ENCODE measurements at regions of chr2 and their contacts with region 1.

Region 1: DNA sequence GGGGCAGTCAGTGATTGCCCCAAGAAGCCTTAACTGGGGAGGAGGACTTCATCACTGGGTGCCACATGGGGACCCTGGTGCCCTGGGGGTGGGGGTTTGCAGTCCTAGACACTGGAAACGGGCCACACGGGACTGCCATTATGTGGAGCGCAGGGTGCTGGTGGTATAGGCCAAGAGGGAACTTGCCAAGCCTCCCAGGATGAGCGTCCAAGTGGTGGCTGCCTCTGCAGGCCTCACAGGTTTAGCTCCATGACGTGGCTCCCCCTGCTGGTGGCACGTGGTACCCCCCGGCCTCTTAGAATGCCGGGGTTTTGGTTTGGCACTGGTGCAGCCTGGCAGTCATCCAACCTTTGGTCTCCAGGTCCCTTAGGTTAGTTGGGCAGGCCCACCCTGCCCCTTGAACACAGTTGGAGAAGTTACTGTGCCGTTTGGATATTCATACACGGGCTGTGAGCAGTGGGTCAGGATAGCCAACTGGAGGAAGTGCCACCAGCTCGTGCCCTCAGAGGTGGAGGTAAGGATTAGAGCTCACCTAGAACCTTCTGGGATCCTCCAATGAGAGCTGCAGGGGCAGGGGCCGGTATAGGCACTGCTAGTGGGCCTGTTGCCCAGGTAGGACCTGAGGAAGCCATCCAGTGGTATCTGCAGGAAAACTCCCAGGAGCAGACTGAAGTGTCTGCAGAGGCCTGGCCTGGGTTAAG is 5.6 kb downstream of the PTMA start:
- DNase-seq: peak; percentile 89
- H3K27ac ChIP-seq: peak overlapping the region; percentile 87
- CTCF ChIP-seq: peak; percentile 91

Region 2: DNA sequence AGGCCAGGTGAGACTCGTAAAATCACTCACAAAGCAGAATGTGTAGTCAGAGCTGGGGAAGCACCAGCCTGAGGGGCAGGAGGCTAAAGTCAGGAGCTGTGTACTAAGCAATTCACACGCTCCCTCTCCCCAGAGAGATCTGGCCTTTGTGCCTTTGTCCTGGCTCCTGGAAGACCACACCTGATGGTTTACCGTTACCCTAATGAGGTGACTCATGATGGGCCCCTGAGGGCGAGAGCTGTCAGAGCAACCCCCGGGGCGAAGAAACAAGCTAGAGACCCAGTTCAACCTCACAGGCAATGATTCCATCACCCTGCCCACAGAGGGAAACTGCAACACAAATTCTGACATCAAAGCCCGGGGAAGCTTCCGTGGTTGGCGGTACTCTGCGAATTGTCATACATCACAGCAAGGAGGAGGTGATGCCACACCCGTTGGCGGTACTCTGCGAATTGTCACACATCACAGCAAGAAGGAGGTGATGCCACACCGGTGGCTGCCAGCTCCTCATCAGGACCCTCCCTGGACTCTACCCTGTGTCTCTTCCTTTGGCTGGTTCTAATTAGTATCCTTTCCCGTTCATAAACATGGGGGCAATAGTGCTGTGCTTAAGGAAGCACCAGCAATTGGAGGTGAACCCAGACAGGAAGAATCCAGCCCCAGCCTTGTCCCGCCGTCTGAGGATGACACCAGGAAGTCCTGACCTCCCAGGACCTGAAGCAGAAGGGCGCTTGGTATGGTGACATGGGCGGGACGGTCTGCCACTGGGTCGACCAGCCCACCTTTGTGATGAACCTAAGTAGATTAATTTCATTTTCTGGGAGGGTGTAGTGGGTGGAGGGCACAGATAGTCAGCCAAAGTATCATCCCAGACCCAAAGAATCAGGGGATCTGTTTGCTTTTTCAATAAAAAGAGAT is 287.8 kb before region 1 on chr2:
- CTCF ChIA-PET with region 1: no interaction called
- POLR2A ChIA-PET with region 1: no interaction called
- DNase-seq: peak; percentile 9
- H3K27ac ChIP-seq: no peak overlapping the region
- CTCF ChIP-seq: no peak

Region 3: GRCh38 chr2:231612179-231613053 is 101.5 kb before region 1 on chr2:
- CTCF ChIA-PET with region 1: interaction called, 19 read pairs
- POLR2A ChIA-PET with region 1: no interaction called
- DNase-seq: peak; percentile 96
- H3K27ac ChIP-seq: peak overlapping the region; percentile 97
- CTCF ChIP-seq: peak; percentile 93

Region 4: GRCh38 chr2:231674587-231675338 is 39.1 kb before region 1 on chr2:
- CTCF ChIA-PET with region 1: interaction called, 111 read pairs
- POLR2A ChIA-PET with region 1: interaction called, 9 read pairs
- DNase-seq: peak; percentile 46
- H3K27ac ChIP-seq: peak overlapping the region; percentile 68
- CTCF ChIP-seq: peak; percentile 88

Region 5: DNA sequence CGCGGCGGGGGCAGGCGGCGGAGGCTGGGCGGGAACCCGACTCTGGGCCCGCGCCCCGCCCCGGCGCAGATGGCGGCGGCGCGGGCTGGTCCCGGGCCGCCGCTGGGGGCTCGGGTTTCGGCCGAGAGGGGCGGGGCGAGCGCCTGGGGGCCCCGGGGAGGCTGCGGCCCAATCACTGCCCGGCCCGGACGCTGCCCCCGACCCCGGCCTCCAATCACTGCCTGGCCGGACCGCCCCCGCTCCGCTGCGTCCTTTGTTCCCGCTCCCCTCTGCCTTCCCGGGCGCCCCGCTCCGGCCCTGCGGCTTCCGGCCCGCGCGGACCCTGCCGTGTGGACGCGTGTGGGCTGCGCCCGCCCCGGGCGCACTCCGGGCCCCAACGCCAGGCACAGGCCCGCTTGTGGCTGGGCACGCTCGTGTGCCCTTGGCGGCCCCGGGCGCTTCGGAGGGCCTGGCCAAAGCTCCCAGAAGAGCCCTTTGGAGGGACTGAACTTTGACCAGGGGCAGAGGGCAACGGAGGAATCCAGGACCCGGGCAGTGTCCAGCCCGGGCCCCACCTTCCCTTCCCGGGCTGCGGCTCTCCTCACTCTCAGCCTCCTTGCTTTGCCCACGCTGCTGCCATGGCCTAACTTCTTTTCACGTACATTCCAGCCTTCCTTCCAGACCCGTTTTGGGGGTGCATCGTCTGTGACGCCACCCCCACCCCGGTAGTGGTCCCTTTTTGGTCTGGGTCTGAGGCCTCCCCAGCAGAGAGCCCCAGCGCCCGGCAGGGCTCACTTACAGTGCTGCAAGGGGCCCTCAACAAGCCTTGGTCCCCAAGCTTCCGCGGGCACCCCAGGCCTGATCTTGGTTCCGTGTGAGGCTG is 32.7 kb before region 1 on chr2:
- CTCF ChIA-PET with region 1: interaction called, 111 read pairs
- POLR2A ChIA-PET with region 1: interaction called, 9 read pairs
- DNase-seq: peak; percentile 71
- H3K27ac ChIP-seq: peak overlapping the region; percentile 97
- CTCF ChIP-seq: no peak

Region 6: GRCh38 chr2:231687133-231687852 is 26.6 kb before region 1 on chr2:
- CTCF ChIA-PET with region 1: interaction called, 29 read pairs
- POLR2A ChIA-PET with region 1: no interaction called
- DNase-seq: peak; percentile 38
- H3K27ac ChIP-seq: peak overlapping the region; percentile 45
- CTCF ChIP-seq: peak; percentile 64

Region 7: GRCh38 chr2:231726228-231726627 is 12.3 kb after region 1 on chr2:
- CTCF ChIA-PET with region 1: interaction called, 23 read pairs
- POLR2A ChIA-PET with region 1: no interaction called
- DNase-seq: no peak
- H3K27ac ChIP-seq: no peak overlapping the region
- CTCF ChIP-seq: no peak